MCF 10A (cell line): ENCODE measurements at regions of chrX and their contacts with region 1.

Region 1: GRCh38 chrX:51487960-51488267 is 8.5 kb downstream of the NUDT11 start:
- DNase-seq: no peak
- H3K4me3 Mint-ChIP-seq: no peak overlapping the region
- H3K27ac Mint-ChIP-seq: no peak overlapping the region
- H3K4me1 Mint-ChIP-seq: no peaks in the 10 kb centered on the region
- H3K27me3 Mint-ChIP-seq: peaks cover 58% of the 10 kb centered on the region
- CTCF ChIP-seq: no peak

Region 2: DNA sequence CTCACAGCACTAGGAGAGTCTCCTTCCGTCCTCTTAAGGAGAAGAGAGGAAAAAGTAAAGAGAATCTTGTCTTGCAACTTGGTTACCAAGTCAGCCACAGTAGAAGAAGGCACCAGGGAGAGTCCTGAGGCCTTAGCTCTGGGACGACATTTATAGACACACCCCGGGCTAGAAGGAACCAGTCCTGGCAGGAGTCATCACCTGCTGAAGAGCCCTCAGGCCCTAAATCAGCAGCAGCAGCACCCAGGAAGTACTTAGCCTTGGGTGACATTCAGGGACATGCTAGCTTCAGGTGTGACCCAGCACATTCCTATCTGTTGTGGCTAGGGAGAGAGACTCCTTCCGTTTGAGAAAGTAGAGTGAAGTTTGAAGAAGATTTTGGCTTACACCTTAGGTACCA is 189.1 kb before region 1 on chrX:
- CTCF ChIA-PET with region 1: no interaction called
- POLR2A ChIA-PET with region 1: no interaction called
- intact Hi-C with region 1: no loop called
- DNase-seq: no peak
- H3K4me3 Mint-ChIP-seq: no peak overlapping the region
- H3K27ac Mint-ChIP-seq: no peak overlapping the region
- H3K4me1 Mint-ChIP-seq: no peaks in the 10 kb centered on the region
- H3K27me3 Mint-ChIP-seq: peaks cover 33% of the 10 kb centered on the region
- CTCF ChIP-seq: no peak

Region 3: DNA sequence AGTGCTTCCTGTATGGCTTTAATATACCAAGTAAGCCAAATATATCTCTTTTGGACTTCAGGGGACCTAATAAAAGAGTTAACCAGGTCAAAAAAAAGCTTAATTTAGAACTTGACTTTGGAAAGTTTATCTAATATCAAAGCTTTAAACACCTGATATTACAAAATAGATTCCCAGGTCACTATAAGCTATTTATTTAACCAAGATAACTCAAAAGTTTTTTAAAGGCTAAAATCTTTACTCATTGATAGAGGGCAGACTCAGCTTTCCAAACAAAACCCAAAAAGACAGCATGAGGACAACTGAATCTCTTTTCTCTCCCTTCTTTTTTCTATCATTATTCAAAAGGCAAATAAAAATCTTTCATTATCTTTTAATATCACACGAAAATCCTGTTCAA is 11.0 kb before region 1 on chrX:
- CTCF ChIA-PET with region 1: interaction called, 40 read pairs
- POLR2A ChIA-PET with region 1: no interaction called
- intact Hi-C with region 1: no loop called
- DNase-seq: no peak
- H3K4me3 Mint-ChIP-seq: no peak overlapping the region
- H3K27ac Mint-ChIP-seq: no peak overlapping the region
- H3K4me1 Mint-ChIP-seq: no peaks in the 10 kb centered on the region
- H3K27me3 Mint-ChIP-seq: peaks cover 47% of the 10 kb centered on the region
- CTCF ChIP-seq: no peak